Mammary epithelial cell (primary cell): ENCODE measurements at regions of chr16 and their contacts with region 1.

Region 1: DNA sequence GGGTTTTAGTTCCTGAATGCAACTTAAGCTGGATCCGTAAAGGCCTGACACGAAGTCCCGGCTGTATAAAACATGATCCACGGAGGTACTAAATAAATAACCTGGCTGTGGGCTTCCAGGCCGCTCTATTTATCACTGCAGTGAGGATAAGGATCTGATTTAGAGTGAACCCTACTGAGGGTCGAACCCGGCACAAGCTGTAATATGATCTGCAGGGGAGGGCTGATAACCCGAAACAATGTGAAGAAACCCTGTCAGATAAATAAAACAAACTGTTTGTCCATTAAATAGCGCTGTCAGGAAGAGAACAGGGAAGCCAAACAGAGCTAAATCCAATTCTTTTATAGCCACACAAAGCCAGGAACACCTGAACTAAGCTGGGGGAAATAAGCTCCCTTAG is 375.6 kb upstream of the SALL1 start:
- DNase-seq: no peak
- H3K4me3 ChIP-seq: no peak overlapping the region
- H3K27ac ChIP-seq: no peak overlapping the region
- H3K4me1 ChIP-seq: no peaks in the 10 kb centered on the region
- H3K27me3 ChIP-seq: no peaks in the 10 kb centered on the region
- CTCF ChIP-seq: no peak

Region 2: DNA sequence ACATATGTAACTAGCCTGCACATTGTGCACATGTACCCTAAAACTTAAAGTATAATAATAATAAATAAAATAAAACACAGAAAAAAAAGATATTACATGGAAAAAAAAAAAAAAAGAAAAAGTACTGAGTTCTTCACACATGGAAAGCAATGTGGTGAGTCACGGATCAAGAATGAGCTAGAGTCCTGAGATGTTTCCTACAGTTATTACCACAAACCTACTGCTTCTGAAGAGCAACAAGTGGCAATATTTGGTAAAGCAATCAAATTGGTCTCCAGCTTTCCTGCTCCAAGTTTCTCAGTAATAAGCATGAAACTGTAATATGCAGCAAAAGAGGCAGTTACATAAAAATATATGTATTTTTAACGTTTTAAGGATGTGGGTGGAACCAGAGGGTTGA is 152.3 kb before region 1 on chr16:
- CTCF ChIA-PET with region 1: interaction called, 11 read pairs
- dilution Hi-C with region 1: no loop called
- in situ Hi-C with region 1: no loop called
- intact Hi-C with region 1: no loop called
- DNase-seq: peak; percentile 46
- H3K4me3 ChIP-seq: no peak overlapping the region
- H3K27ac ChIP-seq: no peak overlapping the region
- H3K4me1 ChIP-seq: peaks cover 5% of the 10 kb centered on the region
- H3K27me3 ChIP-seq: no peaks in the 10 kb centered on the region
- CTCF ChIP-seq: peak in 1 of 2 donors; percentile 8